PC-9 (cell line): ENCODE measurements at regions of chr5 and their contacts with region 1.

Region 1: GRCh38 chr5:34656001-34656699 is at the start of gene RAI14:
- DNase-seq: peak; percentile 75 to 97
- H3K4me3 ChIP-seq: peak within 1 kb of the TSS; percentile 82
- H3K27ac ChIP-seq: peak within 1 kb of the TSS; percentile 87
- H3K4me1 ChIP-seq: peaks cover 46% of the 10 kb centered on the region
- H3K27me3 ChIP-seq: no peaks in the 10 kb centered on the region
- CTCF ChIP-seq: no peak
- total RNA-seq, gene RAI14: 133 and 145 TPM in 2 replicates

Region 2: DNA sequence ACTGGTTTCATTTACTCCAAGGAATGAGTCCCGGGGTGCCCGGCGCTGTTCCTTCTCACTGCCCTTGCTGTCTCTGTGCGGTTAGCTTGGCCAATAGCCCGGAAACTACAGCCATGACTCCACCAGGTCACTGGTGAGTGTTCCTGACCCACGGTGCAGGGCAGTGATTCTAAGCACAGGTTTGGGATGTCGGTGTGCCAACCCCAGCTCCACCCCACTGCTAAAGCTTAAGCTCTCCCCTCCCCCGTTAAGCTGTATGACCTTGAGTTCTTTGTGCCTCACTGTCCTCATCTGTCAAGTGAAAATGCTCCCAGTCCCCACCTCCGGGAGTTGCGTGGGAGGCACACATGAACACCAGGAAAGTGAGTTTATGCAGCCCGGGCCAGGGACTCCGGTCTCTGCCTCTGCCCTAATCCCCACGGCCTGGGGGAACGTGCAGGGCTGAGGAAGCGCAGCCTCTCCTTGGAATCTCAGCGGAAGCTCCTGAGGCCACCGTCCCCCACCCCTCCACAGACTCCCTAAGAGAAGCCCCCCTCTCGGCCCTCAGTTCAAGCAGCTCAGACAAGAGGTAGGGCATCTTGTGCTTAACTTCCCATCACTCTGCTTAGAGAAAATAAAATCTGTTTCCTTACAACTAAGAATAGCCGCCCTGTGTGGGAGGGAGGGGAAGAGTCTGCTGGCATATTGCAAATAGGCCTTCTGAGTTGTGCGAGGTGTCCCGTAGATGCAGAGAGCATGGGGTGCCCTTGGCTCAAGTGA is 92.0 kb before region 1 on chr5:
- CTCF ChIA-PET with region 1: no interaction called
- POLR2A ChIA-PET with region 1: interaction called, 5 read pairs
- intact Hi-C with region 1: loop called (anchors 1 kb)
- DNase-seq: peak; percentile 77 to 85
- H3K4me3 ChIP-seq: no peak overlapping the region
- H3K27ac ChIP-seq: peak overlapping the region; percentile 64
- H3K4me1 ChIP-seq: peaks cover 20% of the 10 kb centered on the region
- H3K27me3 ChIP-seq: no peaks in the 10 kb centered on the region
- CTCF ChIP-seq: no peak

Region 3: DNA sequence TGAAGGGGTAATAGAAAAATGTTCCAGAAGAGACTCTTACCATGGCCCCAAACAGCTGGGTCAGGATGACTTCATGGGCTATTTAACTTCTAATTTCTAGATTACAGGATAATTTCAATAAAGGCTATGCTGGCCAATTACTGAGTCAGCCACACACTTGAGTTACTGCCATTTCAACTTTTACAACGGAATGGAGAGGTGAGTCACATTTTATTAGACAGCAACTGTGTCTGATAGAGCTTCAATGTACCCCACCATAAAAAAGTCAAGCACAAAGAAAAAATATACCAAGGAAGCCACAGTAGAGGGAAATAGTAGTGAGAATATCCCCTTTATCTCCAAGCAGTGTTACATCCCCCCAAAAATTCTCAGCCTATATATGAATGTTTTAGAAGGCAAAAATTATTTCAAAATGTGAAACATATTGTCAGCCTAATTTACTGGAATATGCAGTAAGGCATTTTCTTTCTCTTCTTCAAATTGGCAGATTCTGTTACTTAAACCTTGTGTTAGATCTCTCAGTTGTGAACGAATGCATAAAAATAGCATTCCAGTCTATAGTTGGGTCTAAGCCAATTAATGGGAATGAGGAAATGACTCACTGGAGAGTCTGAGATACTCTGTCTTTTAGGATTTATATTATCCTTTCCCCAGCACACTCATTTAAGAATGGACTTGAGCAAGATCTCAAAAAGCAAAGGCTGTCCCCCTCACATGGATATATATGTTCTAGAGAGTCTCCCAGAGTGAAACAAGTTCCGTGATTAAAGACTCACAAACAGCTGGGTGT is 47.1 kb before region 1 on chr5:
- CTCF ChIA-PET with region 1: no interaction called
- POLR2A ChIA-PET with region 1: no interaction called
- intact Hi-C with region 1: loop called (anchors 1 kb)
- DNase-seq: peak; percentile 43 to 94
- H3K4me3 ChIP-seq: peak overlapping the region; percentile 12; the same call in 1 of the 2 replicates
- H3K27ac ChIP-seq: peak overlapping the region; percentile 82
- H3K4me1 ChIP-seq: peaks cover 39% of the 10 kb centered on the region
- H3K27me3 ChIP-seq: no peaks in the 10 kb centered on the region
- CTCF ChIP-seq: no peak

Region 4: GRCh38 chr5:34717426-34718327 is 61.5 kb after region 1 on chr5:
- CTCF ChIA-PET with region 1: no interaction called
- POLR2A ChIA-PET with region 1: interaction called, 5 read pairs
- intact Hi-C with region 1: loop called (anchors 1 kb)
- DNase-seq: peak; percentile 87 to 100
- H3K4me3 ChIP-seq: peak overlapping the region; percentile 17; the same call in 1 of the 2 replicates
- H3K27ac ChIP-seq: peak overlapping the region; percentile 97
- H3K4me1 ChIP-seq: peaks cover 60% of the 10 kb centered on the region
- H3K27me3 ChIP-seq: no peaks in the 10 kb centered on the region
- CTCF ChIP-seq: no peak

Region 5: DNA sequence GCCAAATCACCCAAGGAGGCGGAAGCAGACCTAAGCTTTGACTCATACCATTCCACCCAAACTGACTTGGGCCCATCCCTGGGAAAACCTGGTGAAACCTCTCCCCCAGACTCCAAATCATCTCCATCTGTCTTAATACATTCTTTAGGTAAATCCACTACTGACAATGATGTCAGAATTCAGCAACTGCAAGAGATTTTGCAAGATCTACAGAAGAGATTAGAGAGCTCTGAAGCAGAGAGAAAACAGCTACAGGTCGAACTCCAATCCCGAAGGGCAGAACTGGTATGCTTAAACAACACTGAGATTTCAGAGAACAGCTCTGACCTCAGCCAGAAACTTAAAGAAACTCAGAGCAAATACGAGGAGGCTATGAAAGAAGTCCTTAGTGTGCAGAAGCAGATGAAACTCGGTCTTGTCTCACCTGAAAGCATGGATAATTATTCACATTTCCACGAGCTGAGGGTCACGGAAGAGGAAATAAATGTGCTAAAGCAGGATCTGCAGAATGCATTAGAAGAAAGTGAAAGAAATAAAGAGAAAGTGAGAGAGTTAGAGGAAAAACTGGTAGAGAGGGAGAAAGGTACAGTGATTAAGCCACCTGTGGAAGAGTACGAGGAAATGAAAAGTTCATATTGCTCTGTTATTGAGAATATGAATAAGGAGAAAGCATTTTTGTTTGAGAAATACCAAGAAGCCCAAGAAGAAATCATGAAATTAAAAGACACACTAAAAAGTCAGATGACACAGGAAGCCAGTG is 167.0 kb after region 1 on chr5:
- CTCF ChIA-PET with region 1: no interaction called
- POLR2A ChIA-PET with region 1: no interaction called
- intact Hi-C with region 1: loop called (anchors 5 kb)
- DNase-seq: no peak
- H3K4me3 ChIP-seq: no peak overlapping the region
- H3K27ac ChIP-seq: no peak overlapping the region
- H3K4me1 ChIP-seq: no peaks in the 10 kb centered on the region
- H3K27me3 ChIP-seq: no peaks in the 10 kb centered on the region
- CTCF ChIP-seq: no peak